ENCODE measurements at regions of chr5 and their contacts with region 1.

Region 1: GRCh38 chr5:167261309-167262100 is 1029.9 kb upstream of the WWC1 start:
- DNase-seq: no peak
- H3K4me3 ChIP-seq: no peak overlapping the region
- H3K27ac ChIP-seq: no peak overlapping the region
- H3K4me1 ChIP-seq: no peaks in the 10 kb centered on the region
- H3K27me3 ChIP-seq: no peaks in the 10 kb centered on the region
- CTCF ChIP-seq: peak; percentile 22

Region 2: GRCh38 chr5:167565032-167565954 is 303.8 kb after region 1 on chr5:
- intact Hi-C with region 1: loop called (anchors 10 kb)
- DNase-seq: no peak
- H3K4me3 ChIP-seq: no peak overlapping the region
- H3K27ac ChIP-seq: no peak overlapping the region
- H3K4me1 ChIP-seq: no peaks in the 10 kb centered on the region
- H3K27me3 ChIP-seq: no peaks in the 10 kb centered on the region
- CTCF ChIP-seq: peak; percentile 13

Measured in colonic mucosa (tissue), 4 donors.